Naive thymus-derived CD4-positive, alpha-beta T cell (primary cell): ENCODE measurements at regions of chr19 and their contacts with region 1.

Region 1: DNA sequence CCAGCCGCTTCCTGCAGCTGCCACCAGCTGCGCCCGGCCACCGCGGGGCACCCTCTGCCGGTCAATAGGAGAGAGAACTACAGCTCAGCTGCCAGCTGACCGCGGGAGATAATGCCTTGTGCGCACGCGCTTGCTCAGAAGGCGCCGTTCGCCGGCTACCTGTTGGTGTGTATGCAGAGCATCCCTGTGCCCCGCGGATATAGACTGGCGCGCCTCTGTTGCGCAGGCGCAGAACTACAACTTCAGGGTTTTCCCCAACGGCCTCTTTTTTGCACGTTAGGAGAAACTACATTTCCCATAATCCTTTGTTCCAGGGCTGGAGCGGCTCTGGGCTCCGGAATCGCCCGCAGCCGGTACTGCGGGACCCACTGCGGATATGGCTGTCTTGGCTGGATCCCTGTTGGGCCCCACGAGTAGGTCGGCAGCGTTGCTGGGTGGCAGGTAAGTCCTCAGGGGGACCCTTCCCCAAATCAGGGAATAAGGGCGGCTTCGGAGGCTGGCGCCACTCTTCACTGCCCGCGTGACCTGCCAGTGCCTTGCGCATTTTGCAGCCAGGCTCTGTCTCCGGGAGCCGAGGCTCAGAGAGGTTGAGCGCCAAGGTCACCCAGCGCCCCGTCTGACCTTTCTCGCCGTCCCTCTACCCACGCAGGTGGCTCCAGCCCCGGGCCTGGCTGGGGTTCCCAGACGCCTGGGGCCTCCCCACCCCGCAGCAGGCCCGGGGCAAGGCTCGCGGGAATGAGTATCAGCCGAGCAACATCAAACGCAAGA is at the start of gene MRPL34:
- DNase-seq: peak; percentile 81 to 96 (median 93)
- ATAC-seq: peak; percentile 65
- H3K4me3 ChIP-seq: peak within 1 kb of the TSS; percentile 93
- H3K4me3 Mint-ChIP-seq: peak within 1 kb of the TSS; percentile 82 to 94 (median 90)
- H3K27ac ChIP-seq: peak within 1 kb of the TSS; percentile 81
- H3K27ac Mint-ChIP-seq: peak within 1 kb of the TSS; percentile 82 to 93 (median 90)
- H3K4me1 ChIP-seq: peaks cover 22 to 32% of the 10 kb centered on the region in 2 donors
- H3K4me1 Mint-ChIP-seq: peaks cover 28 to 64% (median 57%) of the 10 kb centered on the region in 7 donors
- H3K27me3 ChIP-seq: no peaks in the 10 kb centered on the region
- H3K27me3 Mint-ChIP-seq: no peaks in the 10 kb centered on the region
- total RNA-seq, gene MRPL34: 37.0 to 76.0 (median 73.3) TPM

Region 2: GRCh38 chr19:17226002-17226933 is 79.4 kb before region 1 on chr19 and contains the start of gene OCEL1:
- CTCF ChIA-PET with region 1: no interaction called
- POLR2A ChIA-PET with region 1: no interaction called
- intact Hi-C with region 1: loop called in 1 of 2 experiments (anchors 1 kb)
- DNase-seq: peak; percentile 91 to 98 (median 97)
- ATAC-seq: peak; percentile 94
- H3K4me3 ChIP-seq: peak within 1 kb of the TSS; percentile 98
- H3K4me3 Mint-ChIP-seq: peak within 1 kb of the TSS; percentile 82 to 98 (median 94)
- H3K27ac ChIP-seq: peak within 1 kb of the TSS; percentile 81
- H3K27ac Mint-ChIP-seq: peak within 1 kb of the TSS; percentile 86 to 99 (median 97)
- H3K4me1 ChIP-seq: peaks cover 0 to 2% of the 10 kb centered on the region in 2 donors
- H3K4me1 Mint-ChIP-seq: peaks cover 3 to 8% (median 5%) of the 10 kb centered on the region in 7 donors
- H3K27me3 ChIP-seq: no peaks in the 10 kb centered on the region
- H3K27me3 Mint-ChIP-seq: no peaks in the 10 kb centered on the region
- total RNA-seq, gene OCEL1: 21.8 to 32.8 (median 29.8) TPM

Region 3: DNA sequence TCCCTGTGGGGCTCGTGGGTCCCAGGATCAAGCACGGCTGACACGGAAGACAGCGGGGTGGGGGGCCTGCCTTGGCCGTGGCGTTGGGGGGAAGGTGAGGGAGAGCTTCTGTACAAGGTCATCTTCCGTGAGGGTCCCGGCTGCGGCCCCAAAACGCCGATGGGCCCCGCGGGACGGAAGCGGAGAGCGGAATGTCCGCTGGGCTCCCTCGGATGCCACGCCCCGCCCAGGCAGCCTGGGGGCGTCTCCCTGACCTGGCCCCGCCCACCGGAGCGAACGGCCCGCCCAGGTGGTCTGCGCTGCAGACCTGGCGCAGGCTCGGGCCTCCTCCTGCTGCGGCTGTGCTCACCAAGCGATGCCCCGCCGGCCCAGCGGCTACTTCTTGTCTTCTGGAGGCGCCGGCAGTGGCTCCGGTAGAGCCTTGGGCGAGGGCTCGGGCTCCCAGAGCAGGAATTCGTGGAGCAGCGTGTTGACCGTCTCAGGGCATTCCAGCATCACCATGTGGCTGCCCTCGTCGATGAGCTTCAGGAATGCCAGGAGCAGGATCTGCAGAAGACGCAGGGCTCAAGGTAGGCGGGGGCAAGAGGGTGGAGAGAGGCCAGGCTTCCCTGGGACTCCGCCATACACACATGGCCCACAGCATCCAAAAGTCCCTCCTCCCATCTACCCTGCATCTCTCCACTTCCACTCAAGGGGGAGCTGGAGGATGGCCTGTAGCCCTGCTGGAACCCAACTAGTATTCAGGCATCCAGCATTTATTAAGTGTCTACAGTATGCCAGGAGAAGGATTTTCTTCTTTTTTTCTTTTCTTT is 13.2 kb before region 1 on chr19:
- CTCF ChIA-PET with region 1: interaction called, 5 read pairs
- POLR2A ChIA-PET with region 1: interaction called, 18 read pairs
- intact Hi-C with region 1: loop called (anchors 1 kb)
- DNase-seq: peak; percentile 71 to 88 (median 79)
- ATAC-seq: peak; percentile 97
- H3K4me3 ChIP-seq: peak overlapping the region; percentile 80
- H3K4me3 Mint-ChIP-seq: peak overlapping the region; percentile 83 to 93 (median 92)
- H3K27ac ChIP-seq: peak overlapping the region; percentile 55
- H3K27ac Mint-ChIP-seq: peak overlapping the region; percentile 33 to 87 (median 77)
- H3K4me1 ChIP-seq: peaks cover 0 to 5% of the 10 kb centered on the region in 2 donors
- H3K4me1 Mint-ChIP-seq: peaks cover 0 to 7% (median 5%) of the 10 kb centered on the region in 7 donors
- H3K27me3 ChIP-seq: no peaks in the 10 kb centered on the region
- H3K27me3 Mint-ChIP-seq: peaks cover 0 to 5% (median 0%) of the 10 kb centered on the region in 5 donors

Region 4: GRCh38 chr19:17327651-17328516 is 22.2 kb after region 1 on chr19:
- CTCF ChIA-PET with region 1: interaction called, 5 read pairs
- POLR2A ChIA-PET with region 1: interaction called, 56 read pairs
- intact Hi-C with region 1: loop called in 1 of 2 experiments (anchors 1 kb)
- DNase-seq: peak in 8 of 9 donors; percentile 35 to 61 (median 50)
- ATAC-seq: peak; percentile 79
- H3K4me3 ChIP-seq: peak overlapping the region; percentile 71
- H3K4me3 Mint-ChIP-seq: peak overlapping the region; percentile 71 to 85 (median 81)
- H3K27ac ChIP-seq: peak overlapping the region; percentile 84
- H3K27ac Mint-ChIP-seq: peak overlapping the region in 7 of 9 donors; percentile 48 to 84 (median 76)
- H3K4me1 ChIP-seq: peaks cover 6 to 7% of the 10 kb centered on the region in 2 donors
- H3K4me1 Mint-ChIP-seq: peaks cover 7 to 28% (median 15%) of the 10 kb centered on the region in 7 donors
- H3K27me3 ChIP-seq: no peaks in the 10 kb centered on the region
- H3K27me3 Mint-ChIP-seq: peaks cover 0 to 12% (median 0%) of the 10 kb centered on the region in 5 donors

Region 5: DNA sequence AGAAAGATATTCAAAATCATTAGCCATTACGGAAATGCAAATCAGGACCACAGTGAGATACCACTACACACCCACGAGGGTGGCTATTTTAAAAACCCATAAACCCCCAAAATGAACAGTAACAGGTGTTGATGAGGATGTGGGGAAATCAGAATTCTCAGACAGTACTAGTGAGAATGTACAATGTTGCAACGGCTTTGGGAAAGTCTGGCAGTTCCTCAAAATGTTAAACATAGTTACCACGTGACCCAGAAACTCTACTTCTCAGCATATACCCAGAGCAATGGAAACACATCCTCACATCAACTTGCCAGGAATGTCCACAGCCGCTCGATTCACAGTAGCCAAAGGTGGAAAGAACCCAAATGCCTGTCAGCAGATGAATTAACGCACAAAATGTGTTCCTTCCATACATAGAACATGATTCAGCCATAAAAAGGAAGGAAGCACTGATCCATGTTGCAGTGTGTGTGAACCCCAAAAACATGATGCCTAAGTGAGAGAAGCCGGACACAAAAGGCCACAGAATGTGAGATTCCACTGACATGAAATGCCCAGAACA is 64.4 kb after region 1 on chr19:
- CTCF ChIA-PET with region 1: no interaction called
- POLR2A ChIA-PET with region 1: no interaction called
- intact Hi-C with region 1: no loop called
- DNase-seq: no peak
- ATAC-seq: peak; percentile 61
- H3K4me3 ChIP-seq: no peak overlapping the region
- H3K4me3 Mint-ChIP-seq: peak overlapping the region in 1 of 10 donors; percentile 1
- H3K27ac ChIP-seq: no peak overlapping the region
- H3K27ac Mint-ChIP-seq: no peak overlapping the region
- H3K4me1 ChIP-seq: no peaks in the 10 kb centered on the region
- H3K4me1 Mint-ChIP-seq: peaks cover 0 to 6% (median 0%) of the 10 kb centered on the region in 7 donors
- H3K27me3 ChIP-seq: no peaks in the 10 kb centered on the region
- H3K27me3 Mint-ChIP-seq: peaks cover 0 to 14% (median 6%) of the 10 kb centered on the region in 5 donors

Region 6: DNA sequence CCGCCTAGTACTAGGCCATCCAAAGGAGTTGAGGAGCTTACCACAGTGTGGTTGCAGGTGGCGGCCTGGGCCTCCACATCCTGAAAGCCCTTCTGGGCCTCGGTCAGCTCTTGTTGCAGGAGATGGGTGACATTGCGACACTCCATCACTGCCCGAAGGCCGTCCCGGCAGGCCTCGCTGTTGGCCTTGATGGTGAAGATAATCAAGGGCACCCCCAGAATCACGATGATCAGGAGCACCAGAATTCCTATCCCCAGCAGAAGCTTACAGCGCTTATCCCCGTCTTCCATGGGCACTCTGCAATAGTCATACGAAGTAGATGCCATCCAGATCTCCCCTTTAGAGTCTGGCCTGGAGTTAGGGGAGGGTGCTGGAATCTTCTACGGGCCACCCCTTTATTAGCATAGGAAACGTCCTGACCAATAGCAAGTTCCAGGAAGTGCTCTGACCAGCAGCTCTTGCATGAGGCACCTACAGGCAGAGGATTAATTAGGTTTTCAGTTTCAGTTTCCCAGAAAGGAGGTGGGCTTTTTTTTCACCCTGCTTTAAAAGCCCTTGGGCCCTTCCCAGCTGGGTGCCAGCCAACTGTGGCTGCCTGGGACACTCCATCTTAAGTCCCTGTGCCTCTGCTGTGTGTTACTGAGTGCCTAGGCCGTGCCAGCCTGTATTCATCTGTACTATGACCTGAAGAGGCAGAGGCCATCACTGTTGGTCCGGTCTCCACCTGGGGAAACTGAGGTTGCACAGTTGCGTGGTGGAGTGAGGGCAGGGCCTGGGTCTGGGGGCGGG is 99.7 kb after region 1 on chr19 and contains the start of gene BST2:
- CTCF ChIA-PET with region 1: no interaction called
- POLR2A ChIA-PET with region 1: no interaction called
- intact Hi-C with region 1: loop called in 1 of 2 experiments (anchors 5 kb)
- DNase-seq: peak in 6 of 9 donors; percentile 20 to 69 (median 50)
- ATAC-seq: peak; percentile 90
- H3K4me3 ChIP-seq: peak within 1 kb of the TSS; percentile 81
- H3K4me3 Mint-ChIP-seq: peak within 1 kb of the TSS; percentile 80 to 98 (median 95)
- H3K27ac ChIP-seq: peak within 1 kb of the TSS; percentile 83
- H3K27ac Mint-ChIP-seq: peak within 1 kb of the TSS; percentile 81 to 98 (median 88)
- H3K4me1 ChIP-seq: peaks cover 0 to 12% of the 10 kb centered on the region in 2 donors
- H3K4me1 Mint-ChIP-seq: peaks cover 20 to 47% (median 35%) of the 10 kb centered on the region in 7 donors
- H3K27me3 ChIP-seq: no peaks in the 10 kb centered on the region
- H3K27me3 Mint-ChIP-seq: peaks cover 0 to 2% (median 0%) of the 10 kb centered on the region in 5 donors
- total RNA-seq, gene BST2: 29.9 to 221 (median 57.1) TPM

Region 7: GRCh38 chr19:17419621-17420466 is 114.1 kb after region 1 on chr19 and contains the start of gene MVB12A:
- CTCF ChIA-PET with region 1: no interaction called
- POLR2A ChIA-PET with region 1: interaction called, 4 read pairs
- intact Hi-C with region 1: loop called (anchors 1 kb)
- DNase-seq: peak; percentile 85 to 98 (median 96)
- ATAC-seq: peak; percentile 99
- H3K4me3 ChIP-seq: peak within 1 kb of the TSS; percentile 79
- H3K4me3 Mint-ChIP-seq: peak within 1 kb of the TSS; percentile 87 to 95 (median 91)
- H3K27ac ChIP-seq: peak within 1 kb of the TSS; percentile 70
- H3K27ac Mint-ChIP-seq: peak within 1 kb of the TSS; percentile 73 to 93 (median 89)
- H3K4me1 ChIP-seq: peaks cover 12 to 15% of the 10 kb centered on the region in 2 donors
- H3K4me1 Mint-ChIP-seq: peaks cover 4 to 28% (median 19%) of the 10 kb centered on the region in 7 donors
- H3K27me3 ChIP-seq: no peaks in the 10 kb centered on the region
- H3K27me3 Mint-ChIP-seq: no peaks in the 10 kb centered on the region
- total RNA-seq, gene MVB12A: 19.5 to 45.1 (median 33.3) TPM

Region 8: GRCh38 chr19:17475541-17476115 is 169.9 kb after region 1 on chr19:
- CTCF ChIA-PET with region 1: no interaction called
- POLR2A ChIA-PET with region 1: no interaction called
- intact Hi-C with region 1: no loop called
- DNase-seq: no peak
- ATAC-seq: peak; percentile 63
- H3K4me3 ChIP-seq: no peak overlapping the region
- H3K4me3 Mint-ChIP-seq: no peak overlapping the region
- H3K27ac ChIP-seq: no peak overlapping the region
- H3K27ac Mint-ChIP-seq: peak overlapping the region in 1 of 9 donors; percentile 17
- H3K4me1 ChIP-seq: peaks cover 6 to 8% of the 10 kb centered on the region in 2 donors
- H3K4me1 Mint-ChIP-seq: peaks cover 6 to 17% (median 11%) of the 10 kb centered on the region in 7 donors
- H3K27me3 ChIP-seq: no peaks in the 10 kb centered on the region
- H3K27me3 Mint-ChIP-seq: peaks cover 0 to 6% (median 0%) of the 10 kb centered on the region in 5 donors